Activated CD4-positive, alpha-beta T cell treated with anti-CD3 and anti-CD28 coated beads for 36 hours (primary cell): ENCODE measurements at regions of chr14 and their contacts with region 1.

Region 1: DNA sequence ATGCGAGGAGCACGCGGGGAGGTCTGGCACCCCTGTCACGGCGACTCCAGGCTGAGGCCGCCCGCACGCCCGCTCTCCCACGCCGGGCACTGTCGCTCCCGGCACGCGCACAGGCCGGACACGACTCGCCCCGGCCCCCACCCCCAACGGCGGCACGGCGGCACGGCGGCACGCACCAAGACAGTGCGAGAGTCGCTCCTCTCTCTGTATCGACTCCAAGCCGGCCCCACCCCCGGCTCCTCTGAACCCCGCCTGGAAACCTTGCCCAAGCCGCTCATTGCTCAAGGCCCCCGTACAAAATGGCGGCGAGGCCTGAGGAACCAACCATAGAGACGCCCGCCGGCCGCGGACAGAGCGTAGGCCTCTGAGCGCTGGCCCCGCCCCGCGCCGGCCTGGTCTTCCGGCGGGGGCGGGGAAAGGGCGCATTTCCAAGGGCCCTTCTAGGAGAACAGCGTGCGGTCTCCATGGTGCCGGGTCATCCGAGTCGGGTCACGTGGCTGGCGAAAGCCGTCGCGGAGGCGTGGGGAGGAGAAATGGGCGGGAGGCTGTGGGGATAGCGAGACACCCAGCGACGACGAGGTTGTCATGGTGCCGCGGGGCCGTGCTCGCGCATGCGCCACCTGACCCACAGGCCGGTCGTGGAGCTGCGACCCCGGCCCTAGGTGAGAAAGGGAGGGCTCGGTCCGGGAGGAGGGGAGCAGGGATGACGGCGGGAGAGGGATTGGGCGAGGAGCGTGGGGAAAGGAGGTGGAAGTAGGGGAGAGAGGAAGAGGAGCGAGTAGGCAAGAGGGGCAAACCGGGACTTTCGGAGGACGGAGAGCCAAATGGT is at the start of gene CIPC:
- DNase-seq: peak; percentile 100
- ATAC-seq: peak; percentile 91
- H3K4me3 Mint-ChIP-seq: peak within 1 kb of the TSS; percentile 87
- H3K27ac Mint-ChIP-seq: peak within 1 kb of the TSS; percentile 99
- H3K4me1 Mint-ChIP-seq: peaks cover 40% of the 10 kb centered on the region
- H3K27me3 Mint-ChIP-seq: no peaks in the 10 kb centered on the region
- total RNA-seq, gene CIPC: 8.6 to 10.0 TPM

Region 2: GRCh38 chr14:76812211-76813044 is 285.5 kb before region 1 on chr14 and contains the start of gene ANGEL1:
- CTCF ChIA-PET with region 1: no interaction called
- POLR2A ChIA-PET with region 1: no interaction called
- intact Hi-C with region 1: loop called in 1 of 2 experiments (anchors 1 kb)
- DNase-seq: peak; percentile 98
- ATAC-seq: peak; percentile 90
- H3K4me3 Mint-ChIP-seq: peak within 1 kb of the TSS; percentile 97
- H3K27ac Mint-ChIP-seq: peak within 1 kb of the TSS; percentile 93
- H3K4me1 Mint-ChIP-seq: peaks cover 27% of the 10 kb centered on the region
- H3K27me3 Mint-ChIP-seq: no peaks in the 10 kb centered on the region
- total RNA-seq, gene ANGEL1: 15.8 to 17.2 TPM

Region 3: GRCh38 chr14:76977793-76978720 is 119.9 kb before region 1 on chr14:
- CTCF ChIA-PET with region 1: no interaction called
- POLR2A ChIA-PET with region 1: no interaction called
- intact Hi-C with region 1: loop called in 1 of 2 experiments (anchors 1 kb)
- DNase-seq: peak; percentile 94
- ATAC-seq: peak; percentile 99
- H3K4me3 Mint-ChIP-seq: peak overlapping the region; percentile 53
- H3K27ac Mint-ChIP-seq: peak overlapping the region; percentile 92
- H3K4me1 Mint-ChIP-seq: peaks cover 26% of the 10 kb centered on the region
- H3K27me3 Mint-ChIP-seq: no peaks in the 10 kb centered on the region

Region 4: GRCh38 chr14:77067632-77068514 is 30.0 kb before region 1 on chr14:
- CTCF ChIA-PET with region 1: interaction called, 48 read pairs
- POLR2A ChIA-PET with region 1: no interaction called
- intact Hi-C with region 1: loop called (anchors 1 to 2 kb)
- DNase-seq: peak; percentile 80
- ATAC-seq: peak; percentile 74
- H3K4me3 Mint-ChIP-seq: no peak overlapping the region
- H3K27ac Mint-ChIP-seq: no peak overlapping the region
- H3K4me1 Mint-ChIP-seq: no peaks in the 10 kb centered on the region
- H3K27me3 Mint-ChIP-seq: no peaks in the 10 kb centered on the region

Region 5: DNA sequence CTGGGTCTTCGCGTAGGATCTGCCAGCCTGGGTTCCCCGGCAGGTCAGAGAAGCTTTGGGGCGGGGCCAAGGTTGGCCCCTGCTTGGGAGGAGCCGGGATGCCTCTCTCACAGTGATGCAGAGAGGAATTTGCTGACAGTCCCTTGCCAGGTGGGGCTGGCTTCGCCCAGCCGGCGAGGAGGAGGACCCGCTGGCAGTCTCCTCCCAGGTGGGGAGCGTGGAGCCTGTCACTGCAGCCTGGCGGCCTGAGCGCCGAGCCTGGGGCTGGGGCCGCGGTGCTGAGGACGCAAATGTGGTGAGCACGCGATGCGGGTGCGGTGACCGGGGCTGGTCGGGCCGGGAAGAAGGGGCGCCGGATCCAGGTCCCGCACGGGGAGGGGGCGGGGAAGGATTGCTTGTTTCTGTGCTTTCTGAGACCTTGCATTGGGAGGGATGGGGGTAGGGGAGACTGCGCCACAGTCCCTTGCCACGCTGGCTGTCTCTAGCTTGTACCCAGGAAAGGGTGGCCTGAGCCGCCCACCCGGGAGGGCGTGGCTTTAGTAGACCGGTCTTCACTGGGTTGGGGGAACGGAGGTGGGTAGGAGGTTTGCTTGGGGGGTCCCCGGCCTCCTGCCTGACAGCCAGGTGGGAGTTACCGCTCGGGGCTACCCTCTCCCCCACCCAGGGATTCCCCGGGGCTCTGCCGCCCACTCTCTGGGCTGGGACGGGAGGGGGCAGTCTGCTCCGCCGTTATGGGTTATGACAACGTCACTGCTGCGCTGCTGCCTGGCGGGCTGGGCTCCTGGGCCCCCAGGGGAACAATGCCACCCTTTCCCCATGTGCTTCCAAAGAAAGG is 83.9 kb after region 1 on chr14 and contains the start of gene TMEM63C:
- CTCF ChIA-PET with region 1: no interaction called
- POLR2A ChIA-PET with region 1: no interaction called
- intact Hi-C with region 1: no loop called
- DNase-seq: peak; percentile 83
- ATAC-seq: peak; percentile 93
- H3K4me3 Mint-ChIP-seq: peak within 1 kb of the TSS; percentile 63
- H3K27ac Mint-ChIP-seq: no peak within 1 kb of the TSS
- H3K4me1 Mint-ChIP-seq: peaks cover 11% of the 10 kb centered on the region
- H3K27me3 Mint-ChIP-seq: peaks cover 19% of the 10 kb centered on the region
- total RNA-seq, gene TMEM63C: 1.1 to 1.4 TPM

Region 6: GRCh38 chr14:77301103-77301502 is 203.2 kb after region 1 on chr14:
- CTCF ChIA-PET with region 1: no interaction called
- POLR2A ChIA-PET with region 1: no interaction called
- intact Hi-C with region 1: loop called in 1 of 2 experiments (anchors 1 kb)
- DNase-seq: peak; percentile 84
- ATAC-seq: no peak
- H3K4me3 Mint-ChIP-seq: no peak overlapping the region
- H3K27ac Mint-ChIP-seq: no peak overlapping the region
- H3K4me1 Mint-ChIP-seq: peaks cover 24% of the 10 kb centered on the region
- H3K27me3 Mint-ChIP-seq: no peaks in the 10 kb centered on the region

Region 7: GRCh38 chr14:77364146-77364545 is 266.2 kb after region 1 on chr14:
- CTCF ChIA-PET with region 1: no interaction called
- POLR2A ChIA-PET with region 1: no interaction called
- intact Hi-C with region 1: no loop called
- DNase-seq: no peak
- ATAC-seq: no peak
- H3K4me3 Mint-ChIP-seq: no peak overlapping the region
- H3K27ac Mint-ChIP-seq: no peak overlapping the region
- H3K4me1 Mint-ChIP-seq: peaks cover 8% of the 10 kb centered on the region
- H3K27me3 Mint-ChIP-seq: no peaks in the 10 kb centered on the region

Region 8: DNA sequence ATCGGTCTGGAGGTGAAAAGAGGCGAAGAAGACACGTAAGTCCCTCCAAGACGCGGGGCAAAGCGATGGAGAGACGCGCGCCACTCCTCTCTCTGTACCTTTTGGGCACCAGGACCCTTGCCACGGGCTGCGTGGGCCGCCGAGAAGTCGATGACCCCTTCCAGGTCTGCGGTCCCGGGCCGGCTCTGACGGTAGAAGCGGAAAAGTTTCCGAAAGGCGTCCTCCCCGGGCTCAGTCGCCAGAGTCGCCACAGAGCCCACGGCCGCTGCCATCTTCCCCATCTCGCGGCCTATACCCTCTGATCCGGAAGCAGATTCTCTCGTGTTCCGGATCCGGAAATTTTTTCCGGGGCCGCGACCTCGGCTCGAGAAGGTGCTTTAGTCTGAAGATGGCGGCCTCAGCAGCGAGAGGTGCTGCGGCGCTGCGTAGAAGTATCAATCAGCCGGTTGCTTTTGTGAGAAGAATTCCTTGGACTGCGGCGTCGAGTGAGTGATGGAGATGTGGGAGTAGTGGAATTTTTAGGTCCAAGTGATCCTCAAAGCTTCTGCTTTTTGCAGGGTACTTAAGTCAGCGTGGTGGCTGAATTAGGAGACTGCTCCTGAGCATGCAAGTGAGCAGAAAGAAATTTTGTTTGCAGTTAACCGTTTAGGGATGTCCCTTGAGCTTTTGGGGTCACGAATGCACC is 610.0 kb after region 1 on chr14 and contains the starts of genes ALKBH1 and SLIRP:
- CTCF ChIA-PET with region 1: no interaction called
- POLR2A ChIA-PET with region 1: no interaction called
- intact Hi-C with region 1: loop called in 1 of 2 experiments (anchors 5 kb)
- DNase-seq: peak; percentile 93
- ATAC-seq: peak; percentile 98
- H3K4me3 Mint-ChIP-seq: peak within 1 kb of the TSS; percentile 95
- H3K27ac Mint-ChIP-seq: peak within 1 kb of the TSS; percentile 94
- H3K4me1 Mint-ChIP-seq: peaks cover 45% of the 10 kb centered on the region
- H3K27me3 Mint-ChIP-seq: no peaks in the 10 kb centered on the region
- total RNA-seq, gene ALKBH1: 16.3 to 16.8 TPM
- total RNA-seq, gene SLIRP: 143 to 156 TPM